Cardiac septum (tissue), 1 donor: ENCODE measurements at regions of chr4 and their contacts with region 1.

Region 1: DNA sequence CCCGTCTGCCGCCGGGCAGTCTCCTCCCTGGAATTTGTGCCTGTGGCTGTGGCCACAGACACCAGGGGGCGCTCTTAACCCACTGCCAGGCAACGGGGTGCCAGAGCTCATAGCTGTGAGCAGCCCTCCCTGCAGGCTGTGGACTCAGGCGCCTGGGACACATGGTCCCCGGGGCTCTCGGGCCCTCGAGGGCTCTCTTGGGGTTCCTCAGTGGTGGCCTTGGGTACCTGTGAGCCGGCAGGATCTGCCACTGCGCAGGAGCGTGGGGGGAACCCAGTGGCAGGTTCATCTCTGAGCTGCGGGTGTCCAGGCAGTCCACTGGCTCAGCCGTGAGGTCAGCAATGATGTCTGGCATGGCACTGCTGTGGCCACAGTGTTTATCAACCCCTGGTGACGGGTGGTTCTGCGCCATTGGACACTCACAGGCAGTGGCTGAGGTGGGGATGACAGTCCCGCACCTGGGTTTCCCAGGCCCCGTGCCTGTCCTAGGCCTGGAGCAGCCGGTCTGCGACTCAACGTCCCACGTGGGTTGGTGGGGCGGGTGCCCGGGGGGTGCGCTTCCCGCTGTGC is 37.2 kb downstream of the PCGF3 start:
- DNase-seq: peak; percentile 83

Region 2: DNA sequence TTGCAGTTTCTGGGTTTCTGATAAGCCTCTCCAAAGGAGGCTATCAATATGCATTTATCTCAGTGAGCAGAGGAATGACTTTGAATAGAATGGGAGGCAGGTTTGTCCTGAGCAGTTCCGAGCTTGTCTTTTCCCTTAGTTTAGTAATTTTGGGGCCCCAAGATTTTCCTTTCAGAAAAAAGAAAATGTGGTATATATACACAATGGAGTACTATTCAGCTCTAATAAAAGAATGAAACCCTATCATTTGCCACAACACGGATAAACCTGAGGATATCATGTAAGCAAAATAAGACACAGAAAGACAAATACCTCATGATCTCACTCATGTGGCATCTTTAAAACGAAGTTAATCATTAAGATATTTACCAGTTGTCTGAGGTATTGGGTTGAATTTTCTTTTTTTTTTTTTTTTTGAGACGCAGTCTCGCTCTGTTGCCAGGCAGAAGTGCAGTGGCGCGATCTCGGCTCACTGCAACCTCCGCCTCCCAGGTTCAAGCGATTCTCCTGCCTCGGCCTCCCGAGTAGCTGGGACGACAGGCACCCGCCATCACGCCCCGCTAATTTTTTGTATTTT is 244.4 kb before region 1 on chr4:
- intact Hi-C with region 1: no loop called
- DNase-seq: no peak

Region 3: GRCh38 chr4:986879-987623 is 244.2 kb after region 1 on chr4 and contains the start of gene IDUA:
- intact Hi-C with region 1: loop called (anchors 5 kb)
- DNase-seq: peak; percentile 92
- total RNA-seq, gene IDUA: 12.9 TPM

Region 4: GRCh38 chr4:1109898-1110506 is 367.2 kb after region 1 on chr4:
- intact Hi-C with region 1: no loop called
- DNase-seq: no peak